CD4-positive, alpha-beta memory T cell (primary cell): ENCODE measurements at regions of chr12 and their contacts with region 1.

Region 1: GRCh38 chr12:49088190-49088931 is 6.2 kb downstream of the DHH start:
- DNase-seq: peak; percentile 68 to 73 (median 69)
- H3K4me3 ChIP-seq: no peak overlapping the region
- H3K4me3 Mint-ChIP-seq: peak overlapping the region in 7 of 8 donors; percentile 17 to 83 (median 56)
- H3K27ac ChIP-seq: no peak overlapping the region
- H3K27ac Mint-ChIP-seq: peak overlapping the region in 4 of 7 donors; percentile 2 to 67 (median 37)
- H3K4me1 ChIP-seq: peaks cover 56% of the 10 kb centered on the region
- H3K4me1 Mint-ChIP-seq: peaks cover 23 to 66% (median 40%) of the 10 kb centered on the region in 4 donors
- H3K27me3 ChIP-seq: peaks cover 41% of the 10 kb centered on the region
- H3K27me3 Mint-ChIP-seq: peaks cover 26 to 41% of the 10 kb centered on the region in 2 donors

Region 2: DNA sequence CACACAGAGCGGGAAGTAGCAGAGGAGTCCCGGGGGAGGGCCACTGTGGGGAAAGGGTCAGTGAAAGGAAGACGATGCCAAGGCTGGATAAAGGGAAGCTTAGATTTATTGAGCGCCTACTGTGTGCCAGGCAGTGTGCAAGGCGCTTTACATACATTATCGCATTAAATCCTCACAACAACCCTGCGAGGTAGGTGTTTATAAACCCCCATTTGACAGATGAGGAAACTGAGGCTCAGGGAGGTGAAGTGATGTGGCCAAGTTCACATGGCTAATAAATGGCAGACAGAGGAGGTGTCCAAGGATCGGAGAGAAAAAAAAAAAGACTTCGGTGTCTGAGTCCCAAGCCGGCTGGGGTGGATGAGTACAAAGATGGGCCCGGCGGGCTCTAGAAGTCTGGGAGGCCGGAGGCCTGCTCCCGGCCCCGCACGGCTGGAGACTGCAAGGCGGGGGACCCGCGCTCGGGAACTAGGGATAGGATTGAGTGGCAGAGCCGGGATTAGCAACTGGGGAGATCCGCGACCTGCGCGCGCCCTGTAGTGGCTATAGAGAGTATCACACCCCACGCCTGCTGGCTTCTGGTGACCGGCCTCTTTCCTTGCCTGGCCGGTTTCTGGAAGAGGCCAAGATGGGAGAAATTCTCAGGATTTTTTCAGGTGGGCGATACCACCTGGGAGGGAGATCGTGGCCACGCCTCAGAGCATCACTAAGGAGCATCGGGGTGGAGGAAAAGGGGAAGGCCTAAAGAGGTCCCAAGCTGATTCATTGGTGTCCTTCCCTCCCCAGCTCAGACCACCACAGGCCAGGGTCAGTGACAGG is 93.1 kb before region 1 on chr12:
- CTCF ChIA-PET with region 1: interaction called, 14 read pairs
- POLR2A ChIA-PET with region 1: interaction called, 8 read pairs
- intact Hi-C with region 1: loop called (anchors 2 kb)
- DNase-seq: peak; percentile 31 to 53 (median 40)
- H3K4me3 ChIP-seq: no peak overlapping the region
- H3K4me3 Mint-ChIP-seq: peak overlapping the region in 6 of 8 donors; percentile 47 to 92 (median 69)
- H3K27ac ChIP-seq: no peak overlapping the region
- H3K27ac Mint-ChIP-seq: peak overlapping the region in 5 of 7 donors; percentile 51 to 93 (median 89)
- H3K4me1 ChIP-seq: peaks cover 40% of the 10 kb centered on the region
- H3K4me1 Mint-ChIP-seq: peaks cover 13 to 44% (median 25%) of the 10 kb centered on the region in 4 donors
- H3K27me3 ChIP-seq: peaks cover 18% of the 10 kb centered on the region
- H3K27me3 Mint-ChIP-seq: peaks cover 34 to 43% of the 10 kb centered on the region in 2 donors

Region 3: GRCh38 chr12:49069507-49070346 is 18.6 kb before region 1 on chr12 and contains the start of gene RHEBL1:
- CTCF ChIA-PET with region 1: interaction called, 221 read pairs
- POLR2A ChIA-PET with region 1: interaction called, 10 read pairs
- intact Hi-C with region 1: loop called (anchors 1 kb)
- DNase-seq: peak; percentile 96 to 98 (median 97)
- H3K4me3 ChIP-seq: peak within 1 kb of the TSS; percentile 69 to 77
- H3K4me3 Mint-ChIP-seq: peak within 1 kb of the TSS; percentile 92 to 99 (median 94)
- H3K27ac ChIP-seq: peak within 1 kb of the TSS; percentile 71
- H3K27ac Mint-ChIP-seq: peak within 1 kb of the TSS; percentile 87 to 98 (median 94)
- H3K4me1 ChIP-seq: peaks cover 13% of the 10 kb centered on the region
- H3K4me1 Mint-ChIP-seq: peaks cover 8 to 18% (median 15%) of the 10 kb centered on the region in 4 donors
- H3K27me3 ChIP-seq: no peaks in the 10 kb centered on the region
- H3K27me3 Mint-ChIP-seq: no peaks in the 10 kb centered on the region
- total RNA-seq, gene RHEBL1: 2.7 to 2.9 TPM

Region 4: DNA sequence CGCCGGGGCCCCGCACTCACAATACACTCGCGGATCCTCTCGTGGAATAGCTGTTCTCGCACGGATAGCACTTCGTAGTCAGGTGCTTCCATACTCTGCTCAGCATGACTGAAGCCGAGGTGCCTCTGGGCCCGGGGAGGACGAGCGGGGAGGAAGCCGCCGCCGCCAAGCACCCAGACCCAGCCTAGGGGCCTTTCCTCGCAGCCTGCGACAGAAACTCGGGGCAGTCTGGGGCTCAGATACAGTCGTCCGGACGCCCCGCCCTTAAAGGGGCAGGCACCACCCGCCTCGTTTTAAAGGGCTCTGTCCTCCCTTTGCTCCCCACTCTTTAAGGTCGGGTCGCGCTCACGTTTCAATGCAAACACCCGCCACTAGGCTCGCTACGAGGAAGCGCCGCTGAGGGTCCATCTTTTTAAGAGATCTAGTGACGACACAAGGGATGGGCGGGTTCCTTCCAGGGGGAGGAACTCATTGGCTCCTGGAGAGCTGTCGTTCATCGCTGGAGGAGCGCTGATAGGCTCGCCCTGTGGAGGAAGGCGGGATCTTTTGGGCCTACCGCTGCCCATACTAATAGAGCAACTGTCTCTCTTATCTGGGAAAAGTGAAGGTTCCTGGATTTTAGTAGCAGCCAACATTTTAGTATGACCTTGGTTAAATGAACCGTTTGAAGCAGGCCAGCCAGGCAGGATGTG is 22.2 kb after region 1 on chr12 and contains the start of gene LMBR1L:
- CTCF ChIA-PET with region 1: interaction called, 31 read pairs
- POLR2A ChIA-PET with region 1: interaction called, 23 read pairs
- intact Hi-C with region 1: loop called (anchors 1 kb)
- DNase-seq: peak; percentile 94 to 99 (median 97)
- H3K4me3 ChIP-seq: peak within 1 kb of the TSS; percentile 73 to 92
- H3K4me3 Mint-ChIP-seq: peak within 1 kb of the TSS; percentile 91 to 99 (median 98)
- H3K27ac ChIP-seq: peak within 1 kb of the TSS; percentile 88
- H3K27ac Mint-ChIP-seq: peak within 1 kb of the TSS; percentile 94 to 99 (median 98)
- H3K4me1 ChIP-seq: peaks cover 22% of the 10 kb centered on the region
- H3K4me1 Mint-ChIP-seq: peaks cover 25 to 48% (median 35%) of the 10 kb centered on the region in 4 donors
- H3K27me3 ChIP-seq: no peaks in the 10 kb centered on the region
- H3K27me3 Mint-ChIP-seq: no peaks in the 10 kb centered on the region
- total RNA-seq, gene LMBR1L: 222 to 226 TPM

Region 5: DNA sequence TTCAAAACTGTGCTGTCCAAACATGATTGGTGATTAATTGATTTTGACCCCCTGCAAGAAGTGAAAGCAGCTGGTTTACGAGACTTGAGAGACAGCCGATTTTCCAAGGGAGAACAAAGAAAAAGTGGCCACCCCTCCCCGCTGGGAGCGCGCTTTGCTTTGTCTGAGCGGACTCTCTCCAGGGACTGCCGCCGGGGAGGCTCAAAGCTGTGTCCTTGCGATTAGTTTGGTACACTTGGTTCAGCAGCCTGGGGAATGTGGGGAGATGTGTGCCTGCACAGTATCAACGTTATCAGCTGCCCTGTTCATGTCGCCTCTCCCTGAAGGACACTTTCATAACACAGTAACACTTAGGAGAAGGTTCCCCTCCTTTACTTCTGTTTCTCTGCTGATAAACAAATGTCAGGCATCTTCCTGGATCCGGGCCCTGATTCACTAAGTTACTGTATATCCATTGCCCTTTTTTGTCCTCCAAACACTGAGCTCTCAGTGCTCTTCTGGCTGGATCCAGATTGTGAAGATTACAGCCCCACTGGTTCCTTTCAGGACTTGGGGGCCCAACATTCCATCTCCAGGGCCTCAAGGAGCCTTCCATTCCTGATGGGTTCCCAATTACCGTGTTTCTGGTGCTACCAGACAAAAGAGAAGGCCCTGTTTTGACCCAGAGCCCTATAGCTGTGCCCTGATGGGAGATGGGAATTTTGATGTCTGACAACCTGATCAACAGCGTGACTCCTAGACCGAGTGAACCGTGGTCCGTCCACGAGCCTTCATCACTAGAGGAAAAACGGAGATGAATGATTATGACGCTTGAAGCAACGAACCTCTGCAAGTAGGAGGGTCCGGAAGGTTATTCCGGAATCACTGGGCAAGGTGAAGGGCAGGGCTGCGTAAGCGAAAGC is 144.8 kb after region 1 on chr12:
- CTCF ChIA-PET with region 1: interaction called, 84 read pairs
- POLR2A ChIA-PET with region 1: interaction called, 8 read pairs
- intact Hi-C with region 1: loop called (anchors 1 kb)
- DNase-seq: no peak
- H3K4me3 ChIP-seq: no peak overlapping the region
- H3K4me3 Mint-ChIP-seq: peak overlapping the region; percentile 21 to 61 (median 53)
- H3K27ac ChIP-seq: no peak overlapping the region
- H3K27ac Mint-ChIP-seq: peak overlapping the region in 6 of 7 donors; percentile 33 to 81 (median 54)
- H3K4me1 ChIP-seq: no peaks in the 10 kb centered on the region
- H3K4me1 Mint-ChIP-seq: peaks cover 0 to 13% (median 6%) of the 10 kb centered on the region in 4 donors
- H3K27me3 ChIP-seq: no peaks in the 10 kb centered on the region
- H3K27me3 Mint-ChIP-seq: no peaks in the 10 kb centered on the region